CD8-positive, alpha-beta T cell (primary cell): ENCODE measurements at regions of chr9 and their contacts with region 1.

Region 1: DNA sequence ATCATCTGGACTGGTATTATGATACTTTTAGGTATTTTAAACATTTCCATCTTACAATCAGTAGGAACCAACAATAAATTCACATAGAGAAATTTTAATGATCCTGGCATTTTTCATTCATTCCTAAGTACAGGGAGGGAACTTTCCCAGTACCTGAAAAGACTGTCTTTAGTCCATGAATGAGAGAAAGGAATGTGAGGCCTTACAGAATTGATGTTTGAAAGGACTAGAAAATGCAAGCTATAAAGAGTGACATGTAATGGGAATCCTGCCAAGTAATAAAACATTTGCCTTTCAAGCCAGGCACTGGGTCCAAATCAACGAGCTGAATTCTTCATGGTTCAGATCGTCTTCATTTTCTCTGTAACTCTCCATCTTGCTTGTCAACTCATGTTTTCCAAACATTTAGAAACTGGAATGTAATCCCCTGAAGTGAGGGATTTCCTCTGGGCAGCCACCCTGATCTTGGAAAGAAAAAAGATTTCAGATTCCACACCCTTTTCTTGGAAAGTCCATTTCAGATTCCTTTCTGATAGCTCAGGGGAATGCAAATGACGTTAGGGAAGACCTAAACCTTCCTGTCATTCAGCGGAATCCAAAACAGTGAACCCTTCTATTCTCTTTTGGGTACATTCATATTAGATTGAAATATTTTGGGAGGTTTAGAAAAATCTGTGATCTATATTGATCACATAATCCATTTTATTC is 315.8 kb downstream of the SH3GL2 start:
- DNase-seq: no peak
- ATAC-seq: no peak
- H3K4me3 ChIP-seq: no peak overlapping the region
- H3K4me3 Mint-ChIP-seq: no peak overlapping the region
- H3K27ac ChIP-seq: no peak overlapping the region
- H3K27ac Mint-ChIP-seq: no peak overlapping the region
- H3K4me1 ChIP-seq: no peaks in the 10 kb centered on the region
- H3K4me1 Mint-ChIP-seq: no peaks in the 10 kb centered on the region
- H3K27me3 ChIP-seq: no peaks in the 10 kb centered on the region
- H3K27me3 Mint-ChIP-seq: no peaks in the 10 kb centered on the region
- CTCF ChIP-seq: no peak

Region 2: DNA sequence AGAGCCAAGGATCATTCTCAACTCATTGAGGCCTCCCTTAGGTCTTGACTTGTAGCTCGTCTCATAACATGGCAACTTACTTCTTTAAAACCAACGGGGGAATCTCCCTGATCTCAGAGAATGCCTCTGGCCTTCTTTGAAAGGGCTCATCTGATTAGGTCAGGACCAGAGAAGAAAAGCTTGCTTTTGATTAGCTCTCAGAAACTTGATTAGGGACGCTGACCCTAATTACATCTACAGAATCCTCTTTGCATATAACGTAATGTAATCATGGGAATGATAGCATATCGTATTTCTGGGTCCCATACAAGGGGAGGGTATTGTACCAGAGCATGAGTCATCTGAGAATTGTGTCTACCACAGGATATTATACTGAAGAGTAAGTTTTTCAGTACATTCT is 440.9 kb before region 1 on chr9:
- CTCF ChIA-PET with region 1: no interaction called
- POLR2A ChIA-PET with region 1: no interaction called
- intact Hi-C with region 1: no loop called
- DNase-seq: no peak
- ATAC-seq: no peak
- H3K4me3 ChIP-seq: no peak overlapping the region
- H3K4me3 Mint-ChIP-seq: no peak overlapping the region
- H3K27ac ChIP-seq: no peak overlapping the region
- H3K27ac Mint-ChIP-seq: no peak overlapping the region
- H3K4me1 ChIP-seq: no peaks in the 10 kb centered on the region
- H3K4me1 Mint-ChIP-seq: no peaks in the 10 kb centered on the region
- H3K27me3 ChIP-seq: no peaks in the 10 kb centered on the region
- H3K27me3 Mint-ChIP-seq: no peaks in the 10 kb centered on the region
- CTCF ChIP-seq: no peak

Region 3: DNA sequence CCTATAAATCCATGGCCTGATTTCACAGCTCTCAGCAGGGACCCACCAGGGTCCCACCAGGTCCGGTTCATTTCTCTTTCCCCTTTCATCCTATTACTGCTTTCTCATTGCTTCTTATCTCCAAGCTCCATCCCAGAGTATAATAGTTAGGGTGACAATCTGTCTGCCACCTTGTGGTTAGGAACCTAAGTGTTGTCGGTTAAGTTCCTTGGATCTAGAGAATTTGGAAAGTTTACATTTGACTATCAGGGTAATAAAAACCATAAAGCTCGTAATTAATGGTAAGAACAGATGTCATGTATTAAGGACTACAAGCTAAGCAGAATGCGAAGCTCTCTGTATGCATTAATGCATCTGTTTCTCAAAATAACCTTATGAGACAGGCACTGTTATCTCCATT is 56.7 kb before region 1 on chr9:
- CTCF ChIA-PET with region 1: no interaction called
- POLR2A ChIA-PET with region 1: no interaction called
- intact Hi-C with region 1: no loop called
- DNase-seq: no peak
- ATAC-seq: no peak
- H3K4me3 ChIP-seq: no peak overlapping the region
- H3K4me3 Mint-ChIP-seq: no peak overlapping the region
- H3K27ac ChIP-seq: no peak overlapping the region
- H3K27ac Mint-ChIP-seq: no peak overlapping the region
- H3K4me1 ChIP-seq: no peaks in the 10 kb centered on the region
- H3K4me1 Mint-ChIP-seq: no peaks in the 10 kb centered on the region
- H3K27me3 ChIP-seq: no peaks in the 10 kb centered on the region
- H3K27me3 Mint-ChIP-seq: no peaks in the 10 kb centered on the region
- CTCF ChIP-seq: no peak

Region 4: DNA sequence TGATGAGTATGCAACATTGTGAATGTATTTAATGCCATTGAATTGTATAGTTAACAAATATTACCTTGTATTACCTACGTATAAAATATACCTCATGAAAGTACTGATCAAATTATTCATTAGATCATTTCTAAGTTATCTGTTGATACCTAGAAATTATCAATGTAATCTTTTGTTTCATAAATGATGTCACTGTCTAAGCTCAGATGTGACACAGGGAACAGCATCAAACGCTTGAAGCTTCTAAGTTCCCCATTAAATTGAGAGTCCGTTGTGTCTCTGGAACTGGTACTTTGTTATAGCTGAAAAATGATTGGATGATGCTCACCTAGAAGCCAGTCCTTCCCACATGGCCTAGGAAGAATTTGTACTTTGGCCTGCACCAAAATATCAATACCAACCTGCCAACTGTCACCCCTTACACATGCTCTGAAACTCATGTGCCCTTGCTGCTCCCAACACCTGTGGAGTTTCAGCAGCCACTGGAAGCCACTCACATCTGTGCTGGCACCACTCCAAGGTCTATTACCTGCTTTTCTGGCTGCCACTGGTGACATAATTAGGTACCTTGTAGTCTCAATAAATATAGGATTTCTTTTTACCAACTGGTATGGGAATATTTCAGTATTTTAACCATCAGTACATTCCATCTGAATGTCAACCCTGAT is 47.7 kb after region 1 on chr9:
- CTCF ChIA-PET with region 1: no interaction called
- POLR2A ChIA-PET with region 1: no interaction called
- intact Hi-C with region 1: loop called in 1 of 2 experiments (anchors 5 kb)
- DNase-seq: no peak
- ATAC-seq: no peak
- H3K4me3 ChIP-seq: no peak overlapping the region
- H3K4me3 Mint-ChIP-seq: no peak overlapping the region
- H3K27ac ChIP-seq: no peak overlapping the region
- H3K27ac Mint-ChIP-seq: no peak overlapping the region
- H3K4me1 ChIP-seq: no peaks in the 10 kb centered on the region
- H3K4me1 Mint-ChIP-seq: no peaks in the 10 kb centered on the region
- H3K27me3 ChIP-seq: no peaks in the 10 kb centered on the region
- H3K27me3 Mint-ChIP-seq: no peaks in the 10 kb centered on the region
- CTCF ChIP-seq: no peak